ENCODE measurements at regions of chr7 and their contacts with region 1.

Region 1: DNA sequence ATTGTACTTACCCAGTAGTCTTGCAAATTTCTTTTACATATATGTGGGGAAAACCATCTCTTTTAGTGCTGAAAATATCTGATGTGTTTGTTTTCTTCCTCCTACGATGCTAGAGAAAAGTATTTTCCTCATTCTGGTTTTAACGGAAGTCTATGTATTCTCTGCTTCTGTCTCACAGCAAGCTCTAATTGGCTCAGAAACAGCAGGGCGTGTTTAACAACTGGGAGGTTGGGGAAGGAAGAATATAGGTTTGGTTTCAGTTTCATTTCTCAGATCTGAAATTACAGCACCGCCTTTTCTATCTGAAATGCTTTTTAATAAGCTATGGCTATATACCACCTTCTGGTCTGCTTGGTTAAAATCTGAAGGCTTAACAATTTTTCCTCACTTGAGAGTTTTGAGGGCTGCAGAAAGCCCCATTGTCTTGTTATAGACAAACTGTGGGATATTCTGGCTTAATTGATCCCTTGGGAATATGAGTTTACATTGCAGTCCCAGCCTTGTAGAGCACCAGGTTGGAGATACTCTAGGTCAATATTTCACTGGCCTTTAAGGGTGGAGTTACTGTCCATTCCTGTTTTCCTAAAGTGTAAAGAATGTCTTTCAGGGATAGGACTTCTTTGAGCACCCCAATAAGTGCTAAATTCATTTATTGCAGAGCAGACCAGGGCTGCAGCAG is at the start of gene SAMD9:
- DNase-seq: peak; percentile 71 to 89 (median 82)
- H3K4me3 ChIP-seq: peak within 1 kb of the TSS; percentile 65 to 96
- H3K4me3 Mint-ChIP-seq: peak within 1 kb of the TSS; percentile 88 to 94 (median 91)
- H3K27ac ChIP-seq: peak within 1 kb of the TSS; percentile 75
- H3K27ac Mint-ChIP-seq: peak within 1 kb of the TSS; percentile 80 to 96 (median 95)
- H3K4me1 ChIP-seq: peaks cover 37% of the 10 kb centered on the region
- H3K4me1 Mint-ChIP-seq: peaks cover 33 to 60% (median 49%) of the 10 kb centered on the region in 4 donors
- H3K27me3 ChIP-seq: no peaks in the 10 kb centered on the region
- H3K27me3 Mint-ChIP-seq: no peaks in the 10 kb centered on the region
- total RNA-seq, gene SAMD9: 55.1 to 56.6 TPM

Region 2: DNA sequence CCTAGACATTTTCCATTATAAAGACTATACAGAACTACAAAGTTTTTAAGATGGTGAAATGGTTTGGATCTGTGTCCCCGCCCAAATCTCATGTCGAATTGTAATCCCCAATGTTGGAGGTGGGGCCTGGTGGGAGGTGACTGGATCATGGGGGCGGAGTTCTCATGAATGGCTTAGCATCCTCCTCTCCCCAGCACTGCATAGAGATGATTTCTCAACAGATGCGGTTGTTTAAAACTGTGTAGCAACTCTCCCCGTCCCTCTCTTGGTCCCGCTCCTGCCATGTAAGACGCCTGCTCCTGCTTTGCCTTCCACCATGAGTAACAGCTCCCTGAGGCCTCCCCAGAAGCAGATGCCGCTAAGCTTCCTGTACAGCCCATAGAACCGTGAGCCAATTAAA is 529.4 kb before region 1 on chr7:
- CTCF ChIA-PET with region 1: interaction called, 6 read pairs
- POLR2A ChIA-PET with region 1: interaction called, 5 read pairs
- intact Hi-C with region 1: loop called (anchors 5 kb)
- DNase-seq: peak in 1 of 5 donors; percentile 4
- H3K4me3 ChIP-seq: peak overlapping the region; percentile 82 to 98
- H3K4me3 Mint-ChIP-seq: peak overlapping the region; percentile 87 to 98 (median 96)
- H3K27ac ChIP-seq: peak overlapping the region; percentile 91
- H3K27ac Mint-ChIP-seq: peak overlapping the region; percentile 19 to 97 (median 80)
- H3K4me1 ChIP-seq: peaks cover 58% of the 10 kb centered on the region
- H3K4me1 Mint-ChIP-seq: peaks cover 41 to 72% (median 52%) of the 10 kb centered on the region in 4 donors
- H3K27me3 ChIP-seq: no peaks in the 10 kb centered on the region
- H3K27me3 Mint-ChIP-seq: no peaks in the 10 kb centered on the region

Region 3: DNA sequence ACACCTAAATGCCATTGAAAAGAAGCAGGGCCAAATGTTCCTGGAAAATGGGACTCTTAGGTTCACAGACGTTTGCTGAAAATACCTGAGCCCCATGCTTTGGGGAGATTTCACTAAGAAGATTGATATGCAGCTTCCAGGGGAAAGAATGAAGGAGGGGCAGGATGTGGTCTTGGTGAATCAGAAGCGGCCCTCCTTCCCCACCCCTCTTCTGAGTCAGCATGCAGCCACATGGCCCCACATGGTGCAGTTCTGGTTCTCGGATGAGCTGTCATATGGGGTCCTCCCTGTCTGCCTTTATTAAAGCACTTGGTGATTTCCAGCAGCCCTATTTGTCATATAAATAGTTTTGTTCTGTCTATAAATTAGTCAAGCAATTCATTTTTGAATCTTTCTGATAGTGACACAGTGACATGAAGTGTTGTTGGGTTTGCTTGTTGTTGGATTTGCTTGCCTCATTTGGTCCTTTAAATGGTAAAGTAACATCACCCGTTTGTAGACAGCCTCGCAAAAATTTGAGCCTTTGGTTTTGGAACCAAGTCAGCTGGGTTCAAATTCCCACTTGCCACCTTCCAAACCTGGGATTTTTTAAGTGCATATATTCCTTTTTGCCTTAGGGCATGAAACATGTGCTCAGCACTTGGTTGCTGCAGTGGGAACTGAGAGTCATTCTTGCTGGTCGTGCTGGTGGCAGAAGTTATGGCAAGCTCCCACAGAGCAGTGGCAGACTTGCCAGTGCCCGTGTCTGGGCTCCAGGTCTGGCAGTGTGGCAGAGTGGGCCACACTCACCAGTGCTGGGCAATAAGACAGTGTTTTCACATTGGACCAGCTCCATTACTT is 213.5 kb before region 1 on chr7:
- CTCF ChIA-PET with region 1: no interaction called
- POLR2A ChIA-PET with region 1: no interaction called
- intact Hi-C with region 1: loop called (anchors 1 kb)
- DNase-seq: peak; percentile 54 to 91 (median 63)
- H3K4me3 ChIP-seq: no peak overlapping the region
- H3K4me3 Mint-ChIP-seq: peak overlapping the region in 6 of 8 donors; percentile 6 to 53 (median 18)
- H3K27ac ChIP-seq: no peak overlapping the region
- H3K27ac Mint-ChIP-seq: peak overlapping the region in 6 of 7 donors; percentile 7 to 82 (median 46)
- H3K4me1 ChIP-seq: peaks cover 17% of the 10 kb centered on the region
- H3K4me1 Mint-ChIP-seq: peaks cover 17 to 25% (median 21%) of the 10 kb centered on the region in 4 donors
- H3K27me3 ChIP-seq: no peaks in the 10 kb centered on the region
- H3K27me3 Mint-ChIP-seq: no peaks in the 10 kb centered on the region

Region 4: DNA sequence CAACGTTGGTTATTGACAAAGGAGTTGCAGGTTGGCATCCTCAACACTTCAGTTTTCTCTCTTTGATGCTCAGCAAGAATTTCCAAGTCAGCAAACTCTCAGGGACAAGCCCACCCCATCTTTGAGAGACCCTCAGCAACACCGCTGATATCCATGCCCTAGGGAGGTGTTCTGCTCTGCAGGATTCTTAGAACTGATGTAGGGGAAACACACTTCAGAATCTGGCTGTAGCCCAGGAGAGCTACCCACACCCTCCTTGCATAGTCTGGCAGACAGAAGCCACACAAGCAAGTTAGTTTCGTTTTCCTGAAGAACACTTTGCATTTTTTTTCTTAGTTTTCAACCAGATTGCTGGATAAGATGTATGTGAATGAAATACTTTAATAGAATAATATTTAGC is 29.4 kb after region 1 on chr7:
- CTCF ChIA-PET with region 1: interaction called, 3 read pairs
- POLR2A ChIA-PET with region 1: interaction called, 14 read pairs
- intact Hi-C with region 1: loop called (anchors 1 kb)
- DNase-seq: peak; percentile 23 to 58 (median 41)
- H3K4me3 ChIP-seq: peak overlapping the region; percentile 44 to 59
- H3K4me3 Mint-ChIP-seq: peak overlapping the region; percentile 89 to 97 (median 92)
- H3K27ac ChIP-seq: peak overlapping the region; percentile 58
- H3K27ac Mint-ChIP-seq: peak overlapping the region; percentile 66 to 97 (median 89)
- H3K4me1 ChIP-seq: peaks cover 30% of the 10 kb centered on the region
- H3K4me1 Mint-ChIP-seq: peaks cover 29 to 41% (median 33%) of the 10 kb centered on the region in 4 donors
- H3K27me3 ChIP-seq: no peaks in the 10 kb centered on the region
- H3K27me3 Mint-ChIP-seq: no peaks in the 10 kb centered on the region